Transverse colon (tissue), 4 donors: ENCODE measurements at regions of chr13 and their contacts with region 1.

Region 1: GRCh38 chr13:80921541-80921940 is 580.6 kb upstream of the SPRY2 start:
- DNase-seq: no peak
- H3K4me3 ChIP-seq: no peak overlapping the region
- H3K27ac ChIP-seq: no peak overlapping the region
- H3K4me1 ChIP-seq: no peaks in the 10 kb centered on the region
- H3K27me3 ChIP-seq: no peaks in the 10 kb centered on the region
- CTCF ChIP-seq: no peak
- EP300 ChIP-seq: no peak
- POLR2A ChIP-seq: no peak

Region 2: DNA sequence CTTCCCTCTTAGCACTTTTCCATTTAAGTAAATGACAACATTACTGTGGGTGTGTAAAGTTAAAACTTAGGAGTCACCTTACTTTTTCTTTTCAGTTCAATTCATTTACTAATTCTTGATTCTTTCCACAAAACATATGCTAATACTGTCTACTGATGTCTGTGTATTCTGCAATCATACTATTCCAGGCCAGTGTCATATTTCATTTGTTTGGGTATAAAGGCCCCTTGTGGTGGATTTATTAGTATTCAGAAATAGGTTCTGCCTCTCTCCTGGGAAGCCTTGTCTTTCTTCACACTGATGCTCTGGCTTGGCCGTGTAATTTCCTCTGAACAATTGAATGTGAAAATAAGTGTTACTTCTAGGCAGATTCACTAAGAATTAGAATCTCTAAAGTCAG is 41.3 kb after region 1 on chr13:
- in situ Hi-C with region 1: no loop called
- intact Hi-C with region 1: loop called (anchors 2 kb)
- DNase-seq: no peak
- H3K4me3 ChIP-seq: no peak overlapping the region
- H3K27ac ChIP-seq: no peak overlapping the region
- H3K4me1 ChIP-seq: no peaks in the 10 kb centered on the region
- H3K27me3 ChIP-seq: no peaks in the 10 kb centered on the region
- CTCF ChIP-seq: no peak
- EP300 ChIP-seq: no peak
- POLR2A ChIP-seq: no peak

Region 3: GRCh38 chr13:82002693-82003092 is 1081.2 kb after region 1 on chr13:
- in situ Hi-C with region 1: no loop called
- intact Hi-C with region 1: no loop called
- DNase-seq: no peak
- H3K4me3 ChIP-seq: no peak overlapping the region
- H3K27ac ChIP-seq: no peak overlapping the region
- H3K4me1 ChIP-seq: no peaks in the 10 kb centered on the region
- H3K27me3 ChIP-seq: no peaks in the 10 kb centered on the region
- CTCF ChIP-seq: no peak
- EP300 ChIP-seq: no peak
- POLR2A ChIP-seq: no peak